Astrocyte of the cerebellum (primary cell): ENCODE measurements at regions of chr19 and their contacts with region 1.

Region 1: DNA sequence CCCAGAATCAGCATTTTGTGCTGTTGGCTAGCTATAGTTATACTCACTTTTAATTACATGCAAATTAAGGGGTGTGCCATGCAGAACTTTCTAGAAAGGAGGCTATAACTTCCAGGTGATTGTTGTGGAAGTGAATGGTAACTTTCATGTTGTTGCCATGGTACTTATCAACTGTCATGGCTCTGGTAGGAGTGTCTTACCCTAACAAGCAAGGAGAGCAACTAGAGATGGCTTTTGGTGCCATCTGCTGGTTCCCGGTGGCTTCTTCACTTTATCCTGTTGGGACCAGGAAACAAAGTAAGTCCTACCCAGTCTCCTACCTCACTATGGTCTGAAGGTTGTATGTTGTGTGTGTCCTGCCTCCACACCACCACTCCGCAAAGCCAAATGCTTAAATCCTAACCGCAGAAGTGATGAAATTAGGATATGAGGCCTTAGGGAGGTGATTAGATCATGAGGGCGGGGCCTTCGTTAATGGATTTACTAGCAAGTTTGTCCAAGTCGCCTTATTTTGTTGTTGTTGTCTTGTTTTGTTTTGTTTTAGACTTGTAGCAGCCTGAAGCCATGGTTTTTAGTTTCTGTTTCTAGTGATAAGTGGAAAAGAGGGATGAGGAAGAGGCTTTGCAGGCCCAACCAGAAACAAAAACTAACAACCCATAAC is 22.6 kb downstream of the FBXL12 start:
- DNase-seq: peak; percentile 88
- H3K4me3 ChIP-seq: no peak overlapping the region
- CTCF ChIP-seq: peak; percentile 85

Region 2: DNA sequence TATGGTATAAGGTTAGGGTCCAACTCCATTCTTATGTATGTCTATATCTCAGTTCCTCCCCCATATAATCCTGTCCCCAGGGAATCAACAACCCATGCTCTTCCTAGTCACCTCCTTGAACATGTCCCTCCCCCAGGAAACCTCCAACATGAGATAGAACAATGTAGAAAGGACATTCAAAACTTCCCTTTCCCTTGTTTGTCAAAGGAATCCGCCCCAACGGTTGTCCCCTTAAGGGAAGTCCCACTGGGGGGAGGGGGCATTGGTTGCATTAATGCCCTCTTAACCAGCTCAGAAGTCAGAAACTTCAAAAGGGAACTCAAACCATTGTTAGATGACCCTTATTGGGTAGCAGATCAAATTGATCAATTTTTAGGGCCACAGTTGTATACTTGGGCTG is 168.4 kb before region 1 on chr19:
- in situ Hi-C with region 1: loop called (anchors 5 kb)
- DNase-seq: no peak
- H3K4me3 ChIP-seq: no peak overlapping the region
- CTCF ChIP-seq: no peak